ENCODE measurements at regions of chr4 and their contacts with region 1.

Region 1: DNA sequence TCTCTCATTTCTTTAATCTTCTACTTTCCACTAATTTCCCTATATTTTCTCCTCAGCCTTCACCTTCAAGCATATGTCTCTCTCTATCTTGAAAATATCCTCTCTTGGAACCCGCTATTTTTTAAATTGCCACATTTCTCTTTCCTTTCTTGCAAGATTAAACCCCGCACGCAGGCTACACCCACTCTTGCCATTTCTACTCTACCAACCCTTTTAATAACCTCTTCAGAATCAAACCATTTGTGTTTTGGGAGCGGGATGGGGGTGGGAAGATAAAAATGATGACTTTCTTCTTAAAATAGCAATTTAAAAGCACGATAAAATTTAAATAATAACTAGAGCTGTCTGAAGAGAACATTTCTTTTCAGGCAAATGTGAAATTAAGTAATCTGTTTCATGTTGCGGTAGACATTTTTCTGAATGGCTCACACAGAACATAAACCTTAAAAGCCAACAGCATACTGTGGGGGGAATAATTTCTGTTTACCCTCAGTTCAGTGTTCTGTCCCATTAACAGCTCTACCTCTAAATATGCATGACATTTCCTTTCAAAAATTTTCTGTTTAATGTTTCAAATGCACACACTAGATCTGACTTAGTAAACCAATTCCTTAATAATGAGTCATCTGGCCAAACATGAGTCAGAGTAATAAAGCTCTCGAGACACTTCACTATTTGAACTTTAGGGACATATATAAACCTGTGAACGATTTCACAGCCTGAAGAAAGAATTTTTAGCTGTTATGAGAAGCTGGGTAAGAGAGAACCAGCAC is 20.5 kb downstream of the ARSJ start:
- DNase-seq: no peak
- ATAC-seq: peak; percentile 91
- H3K4me3 ChIP-seq: no peak overlapping the region
- H3K4me1 ChIP-seq: peaks cover 5% of the 10 kb centered on the region
- CTCF ChIP-seq: no peak

Region 2: DNA sequence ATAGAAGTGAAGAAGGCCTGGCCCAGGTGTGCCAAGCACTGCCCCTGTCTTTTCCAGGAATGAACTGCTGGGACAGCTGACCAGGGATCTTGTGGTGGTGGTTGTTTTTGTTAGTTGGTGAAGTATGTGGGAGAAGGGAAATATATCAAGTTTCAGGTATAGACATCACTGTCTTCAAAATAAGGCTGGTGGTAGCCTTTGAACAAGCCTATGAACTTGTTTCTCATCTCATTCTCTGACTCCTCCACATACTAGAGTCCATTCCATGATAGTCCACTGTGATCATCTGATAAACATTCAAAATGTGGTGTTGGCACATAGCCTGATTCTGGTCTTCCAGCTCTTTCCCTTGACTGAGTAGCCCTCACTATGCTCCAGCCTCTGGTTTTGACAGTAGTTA is 501.1 kb before region 1 on chr4:
- intact Hi-C with region 1: no loop called
- DNase-seq: no peak
- ATAC-seq: no peak
- H3K4me3 ChIP-seq: no peak overlapping the region
- H3K4me1 ChIP-seq: no peaks in the 10 kb centered on the region
- CTCF ChIP-seq: no peak

Region 3: DNA sequence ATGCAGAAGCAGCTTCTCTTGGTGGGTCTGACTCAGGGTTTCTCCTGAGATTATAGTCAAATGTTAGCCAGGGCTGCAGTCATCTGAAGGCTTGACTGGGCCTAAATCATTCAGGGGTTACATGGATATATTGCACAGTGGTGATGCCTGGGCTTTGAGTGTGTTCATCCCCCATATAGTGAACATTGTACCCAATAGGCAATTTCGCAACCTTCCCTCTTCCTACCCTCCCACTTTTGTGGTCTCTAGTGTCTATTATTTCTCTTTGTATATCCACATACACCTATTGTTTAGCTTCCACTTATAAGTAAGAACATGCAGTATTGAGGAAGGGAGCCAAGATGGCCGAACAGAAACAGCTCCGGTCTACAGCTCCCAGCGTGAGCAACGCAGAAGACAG is 107.1 kb before region 1 on chr4:
- intact Hi-C with region 1: no loop called
- DNase-seq: no peak
- ATAC-seq: no peak
- H3K4me3 ChIP-seq: no peak overlapping the region
- H3K4me1 ChIP-seq: no peaks in the 10 kb centered on the region
- CTCF ChIP-seq: no peak

Region 4: DNA sequence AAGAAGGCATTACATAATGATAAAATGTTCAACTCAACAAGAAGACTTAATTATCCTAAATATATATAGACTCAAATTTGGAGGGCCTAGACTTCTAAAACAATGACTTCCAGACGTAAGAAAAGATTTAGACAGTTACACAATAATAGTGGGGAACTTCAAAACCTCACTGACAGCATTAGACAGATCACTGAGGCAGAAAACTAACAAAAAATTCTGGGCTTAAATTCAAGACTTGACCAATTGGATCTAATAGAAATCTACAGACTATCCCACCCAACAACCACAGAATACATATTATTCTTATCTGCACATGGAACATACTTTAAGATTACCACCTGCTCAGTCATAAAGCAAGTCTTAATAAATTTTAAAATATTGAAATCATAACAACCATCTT is 113.8 kb after region 1 on chr4:
- intact Hi-C with region 1: loop called in 1 of 2 experiments (anchors 5 kb)
- DNase-seq: no peak
- ATAC-seq: no peak
- H3K4me3 ChIP-seq: no peak overlapping the region
- H3K4me1 ChIP-seq: no peaks in the 10 kb centered on the region
- CTCF ChIP-seq: no peak

Region 5: GRCh38 chr4:114087596-114088230 is 128.8 kb after region 1 on chr4:
- intact Hi-C with region 1: no loop called
- DNase-seq: no peak
- ATAC-seq: no peak
- H3K4me3 ChIP-seq: no peak overlapping the region
- H3K4me1 ChIP-seq: no peaks in the 10 kb centered on the region
- CTCF ChIP-seq: no peak

Region 6: GRCh38 chr4:114217150-114217817 is 258.3 kb after region 1 on chr4:
- intact Hi-C with region 1: no loop called
- DNase-seq: no peak
- ATAC-seq: no peak
- H3K4me3 ChIP-seq: no peak overlapping the region
- H3K4me1 ChIP-seq: no peaks in the 10 kb centered on the region
- CTCF ChIP-seq: no peak

Measured in mucosa of descending colon (tissue), 3 donors.